CD14-positive monocyte (primary cell): ENCODE measurements at regions of chr6 and their contacts with region 1.

Region 1: GRCh38 chr6:149271348-149272340 is 45.9 kb upstream of the TAB2 start:
- DNase-seq: peak; percentile 83 to 92 (median 86)
- H3K4me3 ChIP-seq: peak overlapping the region in 2 of 3 experiments; percentile 12 to 61
- H3K4me3 Mint-ChIP-seq: peak overlapping the region; percentile 56 to 80
- H3K27ac ChIP-seq: peak overlapping the region; percentile 60 to 91
- H3K27ac Mint-ChIP-seq: peak overlapping the region; percentile 96 to 99 (median 98)
- H3K4me1 ChIP-seq: peaks cover 85 to 92% of the 10 kb centered on the region in 2 donors
- H3K4me1 Mint-ChIP-seq: peaks cover 81% of the 10 kb centered on the region
- H3K27me3 ChIP-seq: no peaks in the 10 kb centered on the region
- H3K27me3 Mint-ChIP-seq: peaks cover 0 to 3% (median 0%) of the 10 kb centered on the region in 3 donors
- CTCF ChIP-seq: no peak

Region 2: DNA sequence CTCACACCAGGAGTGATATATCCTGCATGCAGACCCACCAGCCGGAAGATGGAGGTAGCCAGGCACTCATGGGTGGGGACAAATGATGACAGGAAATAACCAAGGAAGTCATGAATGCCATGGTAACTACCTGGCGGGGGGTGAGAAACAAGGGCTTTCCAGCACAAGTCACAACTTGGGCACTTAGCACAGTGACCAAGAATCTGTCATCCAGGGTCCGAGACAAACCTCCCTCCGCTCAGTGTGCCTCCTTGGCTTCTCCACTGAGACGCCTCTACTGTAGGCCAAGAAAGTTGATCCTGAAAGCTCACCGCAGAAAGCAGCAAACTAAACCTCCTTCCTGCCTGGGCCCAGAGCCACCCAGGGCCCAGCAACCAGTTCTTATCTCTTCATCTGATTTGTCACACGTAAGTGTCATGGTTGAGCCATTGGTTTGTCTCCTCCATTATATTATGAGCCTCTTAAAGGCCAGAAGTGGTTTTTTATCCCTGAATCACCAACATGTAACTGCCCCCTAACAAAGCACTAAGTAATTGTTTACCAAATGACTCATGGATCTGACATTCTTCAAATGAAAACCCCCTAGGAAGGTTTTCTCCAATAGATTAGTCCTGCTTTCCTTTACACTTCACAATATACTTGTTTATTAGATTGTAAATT is 38.5 kb before region 1 on chr6:
- intact Hi-C with region 1: loop called in 1 of 2 experiments (anchors 5 kb)
- DNase-seq: peak in 2 of 3 donors; percentile 26 to 66
- H3K4me3 ChIP-seq: no peak overlapping the region
- H3K4me3 Mint-ChIP-seq: no peak overlapping the region
- H3K27ac ChIP-seq: peak overlapping the region in 1 of 2 donors; percentile 85
- H3K27ac Mint-ChIP-seq: peak overlapping the region in 5 of 7 donors; percentile 65 to 97 (median 90)
- H3K4me1 ChIP-seq: peaks cover 62 to 64% of the 10 kb centered on the region in 2 donors
- H3K4me1 Mint-ChIP-seq: peaks cover 70% of the 10 kb centered on the region
- H3K27me3 ChIP-seq: no peaks in the 10 kb centered on the region
- H3K27me3 Mint-ChIP-seq: no peaks in the 10 kb centered on the region
- CTCF ChIP-seq: no peak

Region 3: DNA sequence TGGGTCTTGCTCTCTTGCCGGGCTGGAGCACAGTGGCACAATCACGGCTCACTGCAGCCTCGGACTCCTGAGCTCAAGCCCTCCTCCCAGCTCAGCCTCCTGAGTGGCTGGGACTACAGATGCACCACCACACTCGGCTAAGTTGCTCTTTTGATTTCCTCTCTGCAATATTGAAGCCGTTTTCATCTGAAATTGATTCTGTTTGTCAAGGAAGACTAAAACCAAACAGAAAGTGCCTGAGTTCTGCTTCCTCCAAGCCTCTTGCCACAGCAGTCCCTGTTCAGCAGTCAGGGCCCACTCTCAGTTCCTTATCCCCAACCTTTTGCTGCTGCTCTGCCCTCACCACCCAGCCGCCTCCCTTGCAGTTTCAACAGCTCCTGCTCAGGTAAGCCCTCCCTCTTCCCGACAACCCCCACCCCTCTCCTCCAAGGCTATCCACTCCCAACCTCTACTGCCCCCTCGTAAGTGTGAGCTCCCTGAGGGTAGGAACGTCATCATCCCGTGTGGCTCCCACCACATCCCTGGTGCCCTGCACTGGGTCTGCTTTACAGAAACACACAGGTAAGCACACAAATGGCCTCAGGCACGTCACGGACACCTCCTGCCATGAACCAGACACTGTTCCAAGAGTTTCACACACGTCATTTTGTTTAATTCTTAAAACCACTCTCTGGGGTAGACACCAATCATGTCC is 24.8 kb before region 1 on chr6:
- intact Hi-C with region 1: no loop called
- DNase-seq: peak; percentile 64 to 82 (median 70)
- H3K4me3 ChIP-seq: peak overlapping the region; percentile 23 to 69 (median 36)
- H3K4me3 Mint-ChIP-seq: peak overlapping the region; percentile 85 to 92
- H3K27ac ChIP-seq: peak overlapping the region; percentile 82 to 94
- H3K27ac Mint-ChIP-seq: peak overlapping the region; percentile 86 to 98 (median 96)
- H3K4me1 ChIP-seq: peaks cover 58 to 61% of the 10 kb centered on the region in 2 donors
- H3K4me1 Mint-ChIP-seq: peaks cover 70% of the 10 kb centered on the region
- H3K27me3 ChIP-seq: no peaks in the 10 kb centered on the region
- H3K27me3 Mint-ChIP-seq: peaks cover 0 to 3% (median 0%) of the 10 kb centered on the region in 3 donors
- CTCF ChIP-seq: no peak

Region 4: DNA sequence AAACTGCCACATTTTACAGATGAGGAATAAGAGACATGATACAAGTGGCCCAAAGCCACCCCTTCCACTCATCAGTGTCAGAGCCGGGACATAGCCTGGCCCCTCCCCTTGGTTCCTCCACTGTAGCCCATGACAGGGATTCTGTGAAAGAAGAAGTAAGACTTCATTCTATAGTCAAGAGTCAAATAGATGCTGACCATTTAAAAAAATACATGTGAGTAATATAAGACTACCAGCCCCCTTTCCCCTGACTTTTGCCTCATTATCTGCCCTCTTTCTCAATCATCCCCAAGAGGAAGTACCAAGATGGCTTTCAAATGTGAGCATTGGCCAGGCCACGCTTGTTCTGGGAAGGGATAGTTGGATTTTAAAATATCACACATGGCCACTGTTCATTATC is 11.9 kb before region 1 on chr6:
- intact Hi-C with region 1: loop called in 1 of 2 experiments (anchors 2 kb)
- DNase-seq: peak; percentile 93 to 94 (median 94)
- H3K4me3 ChIP-seq: peak overlapping the region in 1 of 3 experiments; percentile 34
- H3K4me3 Mint-ChIP-seq: no peak overlapping the region
- H3K27ac ChIP-seq: peak overlapping the region; percentile 89 to 90
- H3K27ac Mint-ChIP-seq: peak overlapping the region; percentile 90 to 97 (median 95)
- H3K4me1 ChIP-seq: peaks cover 58 to 67% of the 10 kb centered on the region in 2 donors
- H3K4me1 Mint-ChIP-seq: peaks cover 66% of the 10 kb centered on the region
- H3K27me3 ChIP-seq: no peaks in the 10 kb centered on the region
- H3K27me3 Mint-ChIP-seq: peaks cover 0 to 4% (median 0%) of the 10 kb centered on the region in 3 donors
- CTCF ChIP-seq: no peak

Region 5: GRCh38 chr6:149316798-149317655 is 45.4 kb after region 1 on chr6:
- intact Hi-C with region 1: loop called in 1 of 2 experiments (anchors 5 kb)
- DNase-seq: peak; percentile 90 to 94 (median 92)
- H3K4me3 ChIP-seq: peak overlapping the region; percentile 82 to 87 (median 83)
- H3K4me3 Mint-ChIP-seq: peak overlapping the region; percentile 91 to 93
- H3K27ac ChIP-seq: peak overlapping the region; percentile 88 to 94
- H3K27ac Mint-ChIP-seq: peak overlapping the region; percentile 86 to 93 (median 91)
- H3K4me1 ChIP-seq: peaks cover 17 to 37% of the 10 kb centered on the region in 2 donors
- H3K4me1 Mint-ChIP-seq: peaks cover 29% of the 10 kb centered on the region
- H3K27me3 ChIP-seq: no peaks in the 10 kb centered on the region
- H3K27me3 Mint-ChIP-seq: no peaks in the 10 kb centered on the region
- CTCF ChIP-seq: peak; percentile 5